ENCODE measurements at regions of chr11 and their contacts with region 1.

Region 1: DNA sequence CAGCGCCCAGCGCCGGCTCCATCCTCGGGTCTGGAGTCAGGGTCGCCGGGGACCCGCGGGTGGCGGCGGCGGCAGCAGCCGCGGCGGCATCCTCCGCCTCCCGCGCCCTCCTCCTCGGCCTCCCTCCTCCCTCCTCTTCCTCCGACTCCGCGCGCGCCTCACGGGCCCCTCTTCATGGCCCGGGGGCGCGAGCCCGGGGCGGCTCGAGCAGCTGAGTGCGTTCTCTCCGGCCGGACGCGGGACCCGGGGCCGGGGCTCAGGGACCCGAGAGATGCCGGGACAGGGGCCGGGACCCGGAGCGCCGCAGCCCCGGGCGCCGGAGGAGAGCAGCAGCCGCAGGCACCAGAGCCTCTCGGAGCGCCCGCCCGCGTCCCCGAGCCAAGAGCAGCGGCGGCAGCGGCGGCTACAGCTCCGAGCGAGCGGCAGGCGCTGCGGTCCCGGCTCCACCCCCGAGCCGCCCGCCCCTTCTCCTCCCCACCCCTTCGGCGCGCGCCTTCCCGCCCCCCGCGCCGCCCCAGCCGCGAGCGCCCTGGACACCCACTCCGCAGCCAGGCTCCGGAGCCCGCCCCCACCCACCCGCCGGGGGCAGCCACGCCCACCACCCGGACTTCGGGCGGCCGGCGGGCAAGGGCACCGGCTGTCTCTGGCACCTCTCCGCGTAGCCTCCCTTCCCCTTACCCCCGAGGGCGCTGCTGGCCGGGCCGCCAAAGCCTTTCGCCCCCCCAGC is at the start of gene CHST1:
- DNase-seq: peak; percentile 76
- ATAC-seq: peak; percentile 86
- total RNA-seq, gene CHST1: 3.2 TPM

Region 2: DNA sequence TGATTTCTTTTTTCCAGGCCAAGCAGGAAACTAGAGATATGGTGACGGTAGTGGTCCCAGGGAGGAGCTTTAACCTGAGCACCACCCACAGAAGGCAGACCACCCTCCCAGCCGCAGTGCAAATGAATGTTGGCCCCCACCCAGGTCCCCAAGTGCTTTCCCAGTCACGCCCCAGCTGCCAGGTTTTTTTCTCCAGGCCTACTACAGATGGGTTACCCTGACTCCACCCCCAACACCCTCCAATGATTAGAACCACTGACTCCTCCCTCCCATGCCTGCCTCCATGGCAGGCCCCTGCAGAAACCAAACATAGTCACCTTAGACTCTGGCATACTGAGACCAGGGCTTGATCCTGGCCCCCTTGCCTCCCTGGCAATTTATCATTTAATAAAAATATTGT is 58.8 kb after region 1 on chr11:
- intact Hi-C with region 1: loop called (anchors 10 kb)
- DNase-seq: no peak
- ATAC-seq: no peak

Measured in Right ventricle myocardium inferior (tissue), 1 donor.